Endothelial cell of umbilical vein (primary cell): ENCODE measurements at regions of chr3 and their contacts with region 1.

Region 1: DNA sequence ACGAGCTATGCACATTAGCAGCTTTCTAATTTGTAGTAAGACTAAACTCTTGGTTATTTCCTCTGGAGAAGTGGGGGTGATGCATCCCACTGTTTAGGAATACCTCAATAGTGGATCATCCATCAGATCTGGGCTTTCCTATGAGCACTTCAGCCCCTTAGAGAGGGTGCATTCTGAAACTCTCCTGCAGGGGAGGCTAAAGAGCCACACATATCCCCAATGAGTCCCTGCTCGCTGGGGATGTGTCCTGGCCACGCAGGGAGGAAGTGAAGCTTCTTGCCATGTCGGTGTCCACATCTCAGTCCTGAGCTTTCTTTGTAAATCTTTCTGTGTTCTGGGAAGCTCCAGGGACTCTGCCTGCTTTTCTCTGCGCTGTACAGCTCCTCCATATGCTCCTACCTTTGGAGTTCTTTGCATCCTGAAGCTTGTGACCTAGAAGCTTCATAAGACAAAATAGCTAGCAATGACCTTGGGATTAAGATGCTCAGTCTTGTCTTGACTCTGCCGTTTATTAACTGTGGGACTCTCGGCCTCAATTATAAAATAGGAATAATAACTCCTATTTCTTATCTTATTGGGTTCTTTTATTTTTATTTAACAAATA is 28.3 kb upstream of the MASP1 start:
- DNase-seq: peak; percentile 53
- H3K4me3 ChIP-seq: no peak overlapping the region
- H3K27ac ChIP-seq: no peak overlapping the region
- H3K4me1 ChIP-seq: peaks cover 8% of the 10 kb centered on the region
- H3K27me3 ChIP-seq: peaks cover 0 to 3% of the 10 kb centered on the region in 2 experiments
- CTCF ChIP-seq: peak; percentile 60 to 67
- POLR2A ChIP-seq: no peak

Region 2: GRCh38 chr3:187066228-187066995 is 253.4 kb before region 1 on chr3:
- CTCF ChIA-PET with region 1: no interaction called
- POLR2A ChIA-PET with region 1: no interaction called
- dilution Hi-C with region 1: no loop called
- intact Hi-C with region 1: no loop called
- DNase-seq: peak; percentile 49
- H3K4me3 ChIP-seq: no peak overlapping the region
- H3K27ac ChIP-seq: no peak overlapping the region
- H3K4me1 ChIP-seq: no peaks in the 10 kb centered on the region
- H3K27me3 ChIP-seq: no peaks in the 10 kb centered on the region
- CTCF ChIP-seq: peak; percentile 17 to 25
- POLR2A ChIP-seq: no peak

Region 3: GRCh38 chr3:187264021-187264420 is 55.8 kb before region 1 on chr3:
- CTCF ChIA-PET with region 1: interaction called, 4 read pairs
- POLR2A ChIA-PET with region 1: no interaction called
- dilution Hi-C with region 1: no loop called
- intact Hi-C with region 1: loop called (anchors 1 kb)
- DNase-seq: peak; percentile 91
- H3K4me3 ChIP-seq: no peak overlapping the region
- H3K27ac ChIP-seq: peak overlapping the region; percentile 47
- H3K4me1 ChIP-seq: peaks cover 32% of the 10 kb centered on the region
- H3K27me3 ChIP-seq: no peaks in the 10 kb centered on the region
- CTCF ChIP-seq: no peak
- POLR2A ChIP-seq: no peak

Region 4: DNA sequence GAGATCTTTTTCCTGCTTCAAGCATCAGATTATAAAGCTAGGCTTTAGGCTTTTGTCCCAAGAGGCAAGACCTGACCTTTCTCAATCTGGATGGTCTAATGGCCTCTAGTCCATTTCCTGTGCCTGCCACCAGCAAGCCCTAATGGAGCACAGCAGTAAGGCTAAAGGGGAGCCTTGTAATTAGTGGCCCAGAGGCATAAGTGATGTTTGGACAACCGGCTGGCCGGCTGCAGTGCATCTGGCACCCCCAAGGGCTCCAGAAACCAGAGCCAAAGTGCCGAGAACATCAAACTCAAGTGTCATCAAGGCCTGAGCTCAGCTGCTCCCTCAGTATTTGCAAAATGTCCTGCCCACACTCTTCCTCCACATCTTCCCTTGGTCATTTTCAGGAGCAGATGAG is 16.5 kb after region 1 on chr3:
- CTCF ChIA-PET with region 1: interaction called, 20 read pairs
- POLR2A ChIA-PET with region 1: no interaction called
- dilution Hi-C with region 1: no loop called
- intact Hi-C with region 1: no loop called
- DNase-seq: no peak
- H3K4me3 ChIP-seq: no peak overlapping the region
- H3K27ac ChIP-seq: no peak overlapping the region
- H3K4me1 ChIP-seq: no peaks in the 10 kb centered on the region
- H3K27me3 ChIP-seq: no peaks in the 10 kb centered on the region
- CTCF ChIP-seq: no peak
- POLR2A ChIP-seq: no peak

Region 5: GRCh38 chr3:187669675-187670504 is 350.1 kb after region 1 on chr3 and contains the start of gene SST:
- CTCF ChIA-PET with region 1: interaction called, 25 read pairs
- POLR2A ChIA-PET with region 1: no interaction called
- dilution Hi-C with region 1: loop called (anchors 25 kb)
- intact Hi-C with region 1: no loop called
- DNase-seq: peak; percentile 45
- H3K4me3 ChIP-seq: no peak within 1 kb of the TSS
- H3K27ac ChIP-seq: no peak within 1 kb of the TSS
- H3K4me1 ChIP-seq: no peaks in the 10 kb centered on the region
- H3K27me3 ChIP-seq: peaks cover 2 to 3% of the 10 kb centered on the region in 2 experiments
- CTCF ChIP-seq: no peak
- POLR2A ChIP-seq: no peak
- total RNA-seq, gene SST: not detected in 2 replicates